ENCODE measurements at regions of chr11 and their contacts with region 1.

Region 1: DNA sequence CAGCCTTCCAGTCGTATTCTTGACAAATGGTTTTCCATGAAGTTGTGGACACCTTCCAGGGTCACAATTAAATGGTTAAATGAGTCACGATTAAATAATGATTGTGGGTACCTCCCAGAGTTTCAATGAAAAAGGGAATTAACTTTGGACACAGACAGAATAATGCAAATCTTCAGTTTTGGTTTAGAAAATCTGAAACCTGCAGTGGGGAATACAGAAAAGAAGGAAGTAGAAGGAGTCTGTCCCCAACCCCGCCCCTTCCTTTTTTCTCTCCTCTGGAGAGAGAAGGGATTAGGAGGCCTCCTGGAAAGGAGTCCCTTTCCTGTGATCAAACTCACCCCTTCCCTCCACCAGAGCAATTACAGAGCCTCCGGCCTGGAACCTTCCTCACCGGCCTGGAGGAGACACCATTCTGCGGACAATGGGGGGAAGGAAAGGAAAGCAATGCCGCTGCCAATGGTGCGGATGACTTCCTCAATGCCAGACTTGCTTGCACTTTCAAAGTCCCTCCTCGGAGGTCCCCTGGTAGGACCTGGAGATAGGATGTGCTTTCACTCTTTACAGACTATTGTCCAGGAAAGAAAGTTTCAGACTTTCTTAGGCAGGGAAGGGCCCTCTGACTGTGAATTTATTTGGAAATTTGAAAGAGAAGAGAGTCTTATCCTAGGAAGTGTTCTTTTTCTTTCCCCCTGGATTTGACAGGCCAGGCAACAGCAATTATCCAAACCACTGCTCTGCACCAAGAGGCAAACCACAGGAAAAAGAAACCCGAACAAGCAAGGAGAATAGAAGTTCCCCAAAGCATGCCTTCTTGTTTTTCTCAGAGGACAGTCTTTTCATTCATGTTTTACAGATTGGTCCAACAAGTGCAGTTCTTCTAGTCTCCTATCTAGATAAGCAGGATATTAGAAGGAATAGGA is 86.8 kb downstream of the PTPRJ start:
- DNase-seq: no peak
- ATAC-seq: no peak
- H3K4me3 ChIP-seq: no peak overlapping the region
- H3K4me3 Mint-ChIP-seq: no peak overlapping the region
- H3K27ac ChIP-seq: no peak overlapping the region
- H3K27ac Mint-ChIP-seq: no peak overlapping the region
- H3K4me1 ChIP-seq: peaks cover 6 to 8% of the 10 kb centered on the region in 2 experiments
- H3K4me1 Mint-ChIP-seq: peaks cover 27 to 43% (median 40%) of the 10 kb centered on the region in 3 donors
- H3K27me3 ChIP-seq: no peaks in the 10 kb centered on the region
- H3K27me3 Mint-ChIP-seq: no peaks in the 10 kb centered on the region

Region 2: GRCh38 chr11:48093795-48094642 is 26.9 kb after region 1 on chr11:
- CTCF ChIA-PET with region 1: interaction called in 1 of 2 experiments, 10 read pairs
- POLR2A ChIA-PET with region 1: no interaction called
- DNase-seq: no peak
- ATAC-seq: no peak
- H3K4me3 ChIP-seq: no peak overlapping the region
- H3K4me3 Mint-ChIP-seq: peak overlapping the region in 2 of 3 donors; percentile 22 to 29
- H3K27ac ChIP-seq: no peak overlapping the region
- H3K27ac Mint-ChIP-seq: no peak overlapping the region
- H3K4me1 ChIP-seq: peaks cover 2 to 26% of the 10 kb centered on the region in 2 experiments
- H3K4me1 Mint-ChIP-seq: peaks cover 75 to 79% (median 75%) of the 10 kb centered on the region in 3 donors
- H3K27me3 ChIP-seq: no peaks in the 10 kb centered on the region
- H3K27me3 Mint-ChIP-seq: no peaks in the 10 kb centered on the region

Region 3: GRCh38 chr11:48114740-48115139 is 47.6 kb after region 1 on chr11:
- CTCF ChIA-PET with region 1: interaction called in 1 of 2 experiments, 12 read pairs
- POLR2A ChIA-PET with region 1: no interaction called
- DNase-seq: no peak
- ATAC-seq: no peak
- H3K4me3 ChIP-seq: no peak overlapping the region
- H3K4me3 Mint-ChIP-seq: no peak overlapping the region
- H3K27ac ChIP-seq: no peak overlapping the region
- H3K27ac Mint-ChIP-seq: peak overlapping the region in 1 of 2 donors; percentile 44
- H3K4me1 ChIP-seq: peaks cover 2 to 6% of the 10 kb centered on the region in 2 experiments
- H3K4me1 Mint-ChIP-seq: peaks cover 3 to 8% (median 5%) of the 10 kb centered on the region in 3 donors
- H3K27me3 ChIP-seq: no peaks in the 10 kb centered on the region
- H3K27me3 Mint-ChIP-seq: no peaks in the 10 kb centered on the region

Measured in T-cell (primary cell).